ENCODE measurements at regions of chr11 and their contacts with region 1.

Region 1: DNA sequence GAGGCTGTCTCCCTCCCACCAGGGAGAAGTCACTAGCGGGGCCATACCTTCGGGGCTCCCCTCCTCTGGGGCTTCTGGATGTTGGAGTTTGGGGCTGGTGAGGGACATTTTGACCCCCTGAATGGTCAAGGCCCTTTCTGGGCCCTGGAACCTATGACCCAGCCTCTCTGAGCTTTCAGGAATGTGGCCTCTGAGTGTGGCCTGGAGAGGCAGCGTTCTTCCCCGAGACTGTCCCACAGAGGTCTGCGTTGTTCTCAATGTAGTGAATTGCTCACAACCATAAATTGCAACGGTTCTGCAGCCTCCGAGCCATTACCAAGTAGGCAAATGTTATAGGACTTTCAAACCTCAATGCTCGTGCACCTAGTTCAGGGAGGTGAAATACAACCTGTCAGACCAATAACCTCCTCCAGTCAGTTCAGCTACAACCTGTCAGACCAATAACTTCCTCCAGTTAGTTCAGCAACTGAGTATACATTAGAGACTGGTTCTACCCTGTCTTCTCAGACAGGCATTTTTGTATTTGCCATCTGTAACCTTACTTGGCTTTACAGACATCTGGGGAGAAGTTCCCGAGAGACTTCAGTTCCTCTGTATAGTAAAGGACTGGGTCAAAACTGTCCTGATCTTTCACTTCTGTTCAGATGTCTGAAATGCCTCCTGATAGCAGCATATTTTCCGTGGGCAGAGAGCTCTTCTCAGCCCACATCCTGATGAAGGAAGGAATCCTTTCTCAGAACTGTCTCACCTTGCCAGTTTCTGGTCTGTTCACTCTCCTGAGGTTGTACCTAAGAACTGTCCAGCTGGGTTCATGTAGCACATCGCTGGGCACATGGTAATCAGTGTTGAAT is 34.2 kb downstream of the MICAL2 start:
- DNase-seq: peak; percentile 63 to 79
- H3K4me3 ChIP-seq: no peak overlapping the region
- H3K4me3 Mint-ChIP-seq: peak overlapping the region; percentile 57
- H3K27ac Mint-ChIP-seq: peak overlapping the region; percentile 83
- H3K4me1 ChIP-seq: peaks cover 79% of the 10 kb centered on the region
- H3K4me1 Mint-ChIP-seq: peaks cover 65% of the 10 kb centered on the region
- H3K27me3 ChIP-seq: no peaks in the 10 kb centered on the region
- H3K27me3 Mint-ChIP-seq: no peaks in the 10 kb centered on the region
- CTCF ChIP-seq: no peak

Region 2: GRCh38 chr11:12110201-12110713 is 34.3 kb before region 1 on chr11 and contains the start of gene MICAL2:
- CTCF ChIA-PET with region 1: no interaction called
- POLR2A ChIA-PET with region 1: no interaction called
- intact Hi-C with region 1: loop called (anchors 1 kb)
- DNase-seq: peak; percentile 90 to 96
- H3K4me3 ChIP-seq: peak within 1 kb of the TSS; percentile 61
- H3K4me3 Mint-ChIP-seq: peak within 1 kb of the TSS; percentile 83
- H3K27ac Mint-ChIP-seq: peak within 1 kb of the TSS; percentile 83
- H3K4me1 ChIP-seq: peaks cover 39% of the 10 kb centered on the region
- H3K4me1 Mint-ChIP-seq: peaks cover 38% of the 10 kb centered on the region
- H3K27me3 ChIP-seq: no peaks in the 10 kb centered on the region
- H3K27me3 Mint-ChIP-seq: no peaks in the 10 kb centered on the region
- CTCF ChIP-seq: no peak
- total RNA-seq, gene MICAL2: 247 and 272 TPM in 2 replicates

Region 3: GRCh38 chr11:12122083-12122482 is 22.5 kb before region 1 on chr11:
- CTCF ChIA-PET with region 1: interaction called, 3 read pairs
- POLR2A ChIA-PET with region 1: interaction called, 3 read pairs
- intact Hi-C with region 1: loop called (anchors 1 kb)
- DNase-seq: peak; percentile 52 to 57
- H3K4me3 ChIP-seq: no peak overlapping the region
- H3K4me3 Mint-ChIP-seq: no peak overlapping the region
- H3K27ac Mint-ChIP-seq: no peak overlapping the region
- H3K4me1 ChIP-seq: peaks cover 86% of the 10 kb centered on the region
- H3K4me1 Mint-ChIP-seq: peaks cover 78% of the 10 kb centered on the region
- H3K27me3 ChIP-seq: no peaks in the 10 kb centered on the region
- H3K27me3 Mint-ChIP-seq: no peaks in the 10 kb centered on the region
- CTCF ChIP-seq: peak; percentile 59 to 60

Region 4: GRCh38 chr11:12159351-12160099 is 15.0 kb after region 1 on chr11:
- CTCF ChIA-PET with region 1: interaction called, 13 read pairs
- POLR2A ChIA-PET with region 1: interaction called, 10 read pairs
- intact Hi-C with region 1: loop called (anchors 1 kb)
- DNase-seq: no peak
- H3K4me3 ChIP-seq: no peak overlapping the region
- H3K4me3 Mint-ChIP-seq: no peak overlapping the region
- H3K27ac Mint-ChIP-seq: peak overlapping the region; percentile 83
- H3K4me1 ChIP-seq: peaks cover 67% of the 10 kb centered on the region
- H3K4me1 Mint-ChIP-seq: peaks cover 63% of the 10 kb centered on the region
- H3K27me3 ChIP-seq: no peaks in the 10 kb centered on the region
- H3K27me3 Mint-ChIP-seq: no peaks in the 10 kb centered on the region
- CTCF ChIP-seq: no peak

Region 5: GRCh38 chr11:12167098-12168000 is 22.8 kb after region 1 on chr11:
- CTCF ChIA-PET with region 1: interaction called, 13 read pairs
- POLR2A ChIA-PET with region 1: interaction called, 10 read pairs
- intact Hi-C with region 1: loop called (anchors 1 kb)
- DNase-seq: peak; percentile 77 to 91
- H3K4me3 ChIP-seq: no peak overlapping the region
- H3K4me3 Mint-ChIP-seq: peak overlapping the region; percentile 48
- H3K27ac Mint-ChIP-seq: peak overlapping the region; percentile 70
- H3K4me1 ChIP-seq: peaks cover 71% of the 10 kb centered on the region
- H3K4me1 Mint-ChIP-seq: peaks cover 63% of the 10 kb centered on the region
- H3K27me3 ChIP-seq: no peaks in the 10 kb centered on the region
- H3K27me3 Mint-ChIP-seq: no peaks in the 10 kb centered on the region
- CTCF ChIP-seq: no peak

Region 6: GRCh38 chr11:12174477-12175143 is 30.1 kb after region 1 on chr11:
- CTCF ChIA-PET with region 1: no interaction called
- POLR2A ChIA-PET with region 1: no interaction called
- intact Hi-C with region 1: loop called (anchors 1 kb)
- DNase-seq: no peak
- H3K4me3 ChIP-seq: no peak overlapping the region
- H3K4me3 Mint-ChIP-seq: no peak overlapping the region
- H3K27ac Mint-ChIP-seq: peak overlapping the region; percentile 94
- H3K4me1 ChIP-seq: peaks cover 73% of the 10 kb centered on the region
- H3K4me1 Mint-ChIP-seq: peaks cover 45% of the 10 kb centered on the region
- H3K27me3 ChIP-seq: no peaks in the 10 kb centered on the region
- H3K27me3 Mint-ChIP-seq: no peaks in the 10 kb centered on the region
- CTCF ChIP-seq: no peak

Region 7: DNA sequence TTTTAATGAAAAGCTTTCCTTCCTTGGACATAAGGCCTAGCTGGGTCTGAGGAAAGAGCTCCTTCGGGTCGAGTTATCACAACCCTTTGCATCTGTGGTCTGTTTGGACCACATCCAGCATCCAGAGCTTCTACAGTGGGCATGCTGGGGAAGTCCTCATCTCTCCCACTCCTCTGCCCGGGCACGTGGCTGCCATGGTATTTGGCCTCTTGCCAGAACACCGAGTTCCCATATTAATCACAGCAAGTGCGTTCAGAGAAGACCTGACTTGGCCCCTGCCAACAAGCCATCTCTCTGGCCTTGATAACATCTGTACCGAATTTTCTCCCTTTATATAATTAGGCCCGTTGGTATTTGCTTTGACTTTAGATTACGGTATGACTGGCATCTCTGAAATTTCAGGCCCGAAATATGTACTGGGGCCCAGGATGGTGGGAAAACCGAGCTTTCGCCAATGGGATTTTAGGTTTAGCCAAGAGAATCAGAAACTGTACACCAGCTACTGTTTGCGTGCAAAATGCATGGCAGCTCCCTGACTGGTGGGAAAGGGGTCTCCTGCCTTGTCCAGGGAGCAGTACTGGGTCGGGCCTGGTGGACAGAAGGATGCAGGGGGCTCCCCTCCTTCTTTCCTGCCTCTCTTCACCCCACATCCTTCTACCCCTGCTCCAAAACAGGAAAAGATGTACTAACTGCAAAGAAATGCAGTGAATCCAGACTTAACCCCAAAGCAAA is 55.9 kb after region 1 on chr11:
- CTCF ChIA-PET with region 1: no interaction called
- POLR2A ChIA-PET with region 1: no interaction called
- intact Hi-C with region 1: loop called (anchors 1 kb)
- DNase-seq: no peak
- H3K4me3 ChIP-seq: no peak overlapping the region
- H3K4me3 Mint-ChIP-seq: peak overlapping the region; percentile 56
- H3K27ac Mint-ChIP-seq: peak overlapping the region; percentile 92
- H3K4me1 ChIP-seq: peaks cover 63% of the 10 kb centered on the region
- H3K4me1 Mint-ChIP-seq: peaks cover 47% of the 10 kb centered on the region
- H3K27me3 ChIP-seq: no peaks in the 10 kb centered on the region
- H3K27me3 Mint-ChIP-seq: no peaks in the 10 kb centered on the region
- CTCF ChIP-seq: no peak